T-cell (primary cell): ENCODE measurements at regions of chr20 and their contacts with region 1.

Region 1: DNA sequence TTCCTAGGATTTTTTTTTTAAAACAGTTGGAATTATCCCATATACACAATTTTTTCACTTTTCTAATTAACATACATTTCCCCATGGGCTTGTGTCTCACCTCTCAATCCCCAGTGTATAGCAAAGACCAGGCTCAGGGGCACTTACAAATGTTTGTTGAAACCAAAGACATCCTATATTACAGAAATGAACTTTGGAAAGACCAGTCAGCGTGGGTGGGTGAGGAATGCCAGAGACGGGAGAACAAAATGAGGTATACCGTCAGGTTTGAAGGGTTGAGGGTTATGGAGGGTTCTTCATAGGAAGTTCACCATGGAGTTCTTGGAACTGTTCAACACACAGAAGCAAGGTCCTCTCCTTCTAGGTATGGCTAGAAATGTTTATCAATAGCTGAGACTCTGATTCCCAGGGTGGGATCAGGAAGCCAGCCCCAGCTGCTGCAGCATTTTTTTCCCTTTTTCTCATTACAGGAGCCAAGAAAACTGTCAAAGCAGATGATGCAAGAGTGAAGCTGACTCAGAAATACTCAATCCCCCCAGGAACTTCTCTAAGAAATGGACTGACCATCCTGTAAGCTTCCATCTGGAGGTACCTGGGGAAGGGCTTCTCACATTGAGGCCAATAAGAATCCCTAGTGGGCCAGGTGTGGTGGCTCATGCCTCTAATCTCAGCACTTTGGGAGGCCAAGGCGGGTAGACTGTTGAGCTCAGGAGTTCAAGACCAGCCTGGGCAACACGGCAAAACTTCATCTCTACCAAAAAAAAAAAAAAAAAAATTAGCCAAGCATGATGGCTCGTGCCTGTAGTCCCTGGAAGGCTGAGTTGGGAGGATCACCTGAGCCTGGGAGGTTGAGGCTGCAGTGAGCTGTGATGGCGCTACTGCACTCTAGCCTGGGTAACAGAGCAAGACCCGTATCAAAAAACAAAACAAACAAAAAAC is 15.9 kb upstream of the TBC1D20 start:
- DNase-seq: no peak
- ATAC-seq: peak in 1 of 4 experiments; percentile 5
- H3K4me3 ChIP-seq: no peak overlapping the region
- H3K4me3 Mint-ChIP-seq: no peak overlapping the region
- H3K27ac ChIP-seq: no peak overlapping the region
- H3K27ac Mint-ChIP-seq: no peak overlapping the region
- H3K4me1 ChIP-seq: peaks cover 2 to 11% of the 10 kb centered on the region in 2 experiments
- H3K4me1 Mint-ChIP-seq: peaks cover 22 to 28% (median 27%) of the 10 kb centered on the region in 3 donors
- H3K27me3 ChIP-seq: no peaks in the 10 kb centered on the region
- H3K27me3 Mint-ChIP-seq: no peaks in the 10 kb centered on the region

Region 2: GRCh38 chr20:330233-331149 is 147.8 kb before region 1 on chr20:
- CTCF ChIA-PET with region 1: no interaction called
- POLR2A ChIA-PET with region 1: no interaction called
- DNase-seq: peak in 33 of 35 experiments; percentile 35 to 78 (median 50)
- ATAC-seq: peak; percentile 29 to 41 (median 34)
- H3K4me3 ChIP-seq: no peak overlapping the region
- H3K4me3 Mint-ChIP-seq: no peak overlapping the region
- H3K27ac ChIP-seq: no peak overlapping the region
- H3K27ac Mint-ChIP-seq: peak overlapping the region; percentile 1 to 66
- H3K4me1 ChIP-seq: peaks cover 10 to 24% of the 10 kb centered on the region in 2 experiments
- H3K4me1 Mint-ChIP-seq: peaks cover 27 to 31% (median 28%) of the 10 kb centered on the region in 3 donors
- H3K27me3 ChIP-seq: no peaks in the 10 kb centered on the region
- H3K27me3 Mint-ChIP-seq: no peaks in the 10 kb centered on the region

Region 3: DNA sequence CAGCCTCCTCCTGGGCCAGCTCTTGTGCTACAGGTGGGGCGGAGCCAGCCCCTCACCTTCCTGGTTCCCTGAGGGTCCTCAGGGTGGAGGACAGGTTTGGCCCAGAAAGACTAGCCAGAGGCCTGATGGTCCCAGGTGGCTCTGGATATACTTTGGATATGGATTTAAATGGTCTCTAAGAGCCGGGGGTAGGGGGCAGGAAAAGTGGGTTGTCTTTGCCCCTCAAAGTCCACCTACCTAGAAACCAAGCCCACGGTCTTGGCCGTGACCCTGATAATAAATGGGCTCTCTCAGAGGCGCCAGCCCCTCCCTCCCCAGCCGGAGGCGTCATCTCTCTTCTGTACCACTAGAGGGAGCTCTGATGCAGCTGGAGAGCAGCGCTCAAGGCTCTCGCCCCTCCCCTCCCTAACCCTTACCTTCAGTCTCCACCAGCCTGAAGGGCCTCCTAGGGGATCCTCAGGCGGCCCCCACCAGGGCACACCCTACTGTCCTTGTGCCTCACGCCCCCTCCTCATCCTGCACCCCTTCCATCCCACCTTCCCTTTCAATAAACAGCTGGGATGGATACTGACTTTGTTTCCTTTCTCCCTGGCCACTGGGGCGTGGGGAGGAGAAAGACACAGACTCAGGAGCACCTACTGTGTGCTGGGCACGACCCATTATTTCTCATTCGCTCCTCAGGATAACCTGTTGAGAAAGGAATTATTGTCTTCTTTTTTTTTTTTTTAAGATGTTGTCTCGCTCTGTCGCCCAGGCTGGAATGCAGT is 123.8 kb before region 1 on chr20:
- CTCF ChIA-PET with region 1: interaction called, 8 to 14 read pairs
- POLR2A ChIA-PET with region 1: no interaction called
- DNase-seq: peak; percentile 54 to 91 (median 73)
- ATAC-seq: peak; percentile 97 to 100 (median 98)
- H3K4me3 ChIP-seq: no peak overlapping the region
- H3K4me3 Mint-ChIP-seq: no peak overlapping the region
- H3K27ac ChIP-seq: no peak overlapping the region
- H3K27ac Mint-ChIP-seq: no peak overlapping the region
- H3K4me1 ChIP-seq: peaks cover 0 to 7% of the 10 kb centered on the region in 2 experiments
- H3K4me1 Mint-ChIP-seq: peaks cover 3 to 5% (median 5%) of the 10 kb centered on the region in 3 donors
- H3K27me3 ChIP-seq: peaks cover 0 to 4% of the 10 kb centered on the region in 2 experiments
- H3K27me3 Mint-ChIP-seq: no peaks in the 10 kb centered on the region

Region 4: GRCh38 chr20:504632-505075 is 26.4 kb after region 1 on chr20:
- CTCF ChIA-PET with region 1: interaction called in 1 of 2 experiments, 11 read pairs
- POLR2A ChIA-PET with region 1: no interaction called
- DNase-seq: no peak
- ATAC-seq: no peak
- H3K4me3 ChIP-seq: no peak overlapping the region
- H3K4me3 Mint-ChIP-seq: no peak overlapping the region
- H3K27ac ChIP-seq: no peak overlapping the region
- H3K27ac Mint-ChIP-seq: no peak overlapping the region
- H3K4me1 ChIP-seq: no peaks in the 10 kb centered on the region
- H3K4me1 Mint-ChIP-seq: peaks cover 4 to 11% (median 9%) of the 10 kb centered on the region in 3 donors
- H3K27me3 ChIP-seq: no peaks in the 10 kb centered on the region
- H3K27me3 Mint-ChIP-seq: no peaks in the 10 kb centered on the region